Testis (tissue), 5 donors: ENCODE measurements at regions of chr22 and their contacts with region 1.

Region 1: DNA sequence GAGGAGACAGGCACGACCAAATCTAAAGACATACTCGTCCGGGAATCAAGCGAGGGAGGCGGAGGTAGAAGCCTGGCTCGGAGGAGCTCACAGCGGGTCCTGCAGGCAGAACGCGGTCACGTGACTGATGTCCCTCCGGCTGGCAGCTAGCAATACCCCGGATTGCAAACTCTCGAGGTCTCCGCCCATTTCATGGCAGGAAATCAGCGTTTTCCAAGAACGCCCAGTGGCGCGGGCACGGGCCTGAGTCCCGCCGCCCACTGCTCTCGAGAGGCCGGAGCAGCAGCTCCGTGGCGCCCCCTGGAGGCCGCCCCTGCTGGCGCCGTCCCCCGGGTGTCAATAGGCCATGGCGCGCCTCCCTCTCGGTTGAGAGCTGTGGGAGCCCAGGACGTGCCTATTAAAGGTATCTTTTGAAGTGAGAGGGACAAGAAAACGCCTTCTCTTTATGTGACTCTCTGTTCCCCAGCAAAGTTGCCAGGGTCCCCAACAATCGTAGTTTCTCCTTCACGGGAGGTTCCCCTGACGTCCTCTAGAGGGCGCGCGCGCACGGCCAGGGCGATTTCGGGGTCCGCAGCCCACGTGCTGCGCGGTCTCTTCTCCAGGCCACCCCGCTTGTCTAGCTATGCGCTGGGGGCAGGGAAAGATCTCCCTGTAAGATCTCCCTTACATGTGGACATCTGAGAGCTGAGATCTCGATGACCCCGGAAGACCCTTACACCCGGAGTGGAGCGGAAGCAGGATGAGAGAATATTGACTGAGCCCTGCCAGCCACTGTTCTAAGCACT is 37.3 kb upstream of the RBFOX2 start:
- DNase-seq: peak; percentile 91
- H3K4me3 ChIP-seq: peak overlapping the region; percentile 51 to 53
- H3K27ac ChIP-seq: peak overlapping the region; percentile 61 to 90
- H3K4me1 ChIP-seq: peaks cover 4% of the 10 kb centered on the region
- H3K27me3 ChIP-seq: no peaks in the 10 kb centered on the region
- CTCF ChIP-seq: peak; percentile 96 to 100 (median 99)
- POLR2A ChIP-seq: no peak

Region 2: DNA sequence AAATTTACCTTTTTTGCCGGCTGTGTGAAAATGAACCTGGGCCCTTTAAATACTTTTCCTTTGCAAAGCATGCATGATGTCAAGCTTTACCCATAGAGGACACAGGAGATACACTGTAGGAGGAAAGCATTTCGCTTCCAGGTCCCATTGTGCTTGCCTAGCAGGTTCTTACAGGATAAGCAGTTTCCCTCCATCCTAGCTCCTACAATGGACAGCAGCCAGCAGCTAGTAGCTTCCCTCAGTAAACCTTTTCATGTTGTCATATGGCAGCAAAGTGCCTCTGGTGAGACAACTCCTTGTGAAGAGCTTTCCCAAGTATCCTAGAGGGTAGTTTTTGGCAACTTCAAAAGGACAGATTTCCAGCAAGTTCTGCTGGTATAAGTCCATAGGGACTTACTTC is 115.7 kb before region 1 on chr22:
- intact Hi-C with region 1: no loop called
- DNase-seq: no peak
- H3K4me3 ChIP-seq: no peak overlapping the region
- H3K27ac ChIP-seq: no peak overlapping the region
- H3K4me1 ChIP-seq: no peaks in the 10 kb centered on the region
- H3K27me3 ChIP-seq: no peaks in the 10 kb centered on the region
- CTCF ChIP-seq: no peak
- POLR2A ChIP-seq: no peak

Region 3: GRCh38 chr22:36123673-36124630 is 58.0 kb after region 1 on chr22:
- intact Hi-C with region 1: loop called (anchors 10 kb)
- DNase-seq: peak; percentile 96
- H3K4me3 ChIP-seq: peak overlapping the region; percentile 27 to 52
- H3K27ac ChIP-seq: peak overlapping the region; percentile 83 to 86
- H3K4me1 ChIP-seq: no peaks in the 10 kb centered on the region
- H3K27me3 ChIP-seq: no peaks in the 10 kb centered on the region
- CTCF ChIP-seq: peak; percentile 96 to 99 (median 99)
- POLR2A ChIP-seq: no peak

Region 4: GRCh38 chr22:36239401-36240171 is 173.6 kb after region 1 on chr22 and contains the start of gene APOL2:
- intact Hi-C with region 1: no loop called
- DNase-seq: peak; percentile 95
- H3K4me3 ChIP-seq: peak within 1 kb of the TSS; percentile 48 to 62
- H3K27ac ChIP-seq: peak within 1 kb of the TSS; percentile 87 to 88
- H3K4me1 ChIP-seq: peaks cover 39% of the 10 kb centered on the region
- H3K27me3 ChIP-seq: no peaks in the 10 kb centered on the region
- CTCF ChIP-seq: peak; percentile 46 to 63 (median 62)
- POLR2A ChIP-seq: no peak
- total RNA-seq, gene APOL2: 19.5 to 34.5 TPM

Region 5: DNA sequence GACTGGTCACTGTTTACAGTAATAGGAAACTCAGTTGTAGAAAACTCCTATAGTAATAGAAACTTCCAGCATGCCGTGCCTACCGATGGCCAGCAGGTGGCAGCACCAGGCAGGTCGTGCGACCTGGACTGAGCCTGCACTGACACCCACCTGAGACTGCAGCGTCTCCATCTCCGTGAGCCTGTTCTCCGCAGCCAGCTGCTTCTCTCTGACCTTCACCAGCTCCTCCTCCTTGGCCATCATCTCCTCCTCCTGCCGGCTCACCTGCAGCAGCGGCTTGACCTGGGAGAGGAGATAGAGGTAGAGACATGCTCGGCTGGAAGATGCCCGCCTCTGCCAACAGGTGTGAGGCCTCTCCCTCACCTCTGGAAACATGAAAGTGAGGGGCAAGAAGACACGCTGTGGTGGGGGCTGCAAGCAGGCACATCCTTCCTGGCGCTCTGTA is 235.4 kb after region 1 on chr22:
- intact Hi-C with region 1: no loop called
- DNase-seq: peak; percentile 81
- H3K4me3 ChIP-seq: no peak overlapping the region
- H3K27ac ChIP-seq: no peak overlapping the region
- H3K4me1 ChIP-seq: no peaks in the 10 kb centered on the region
- H3K27me3 ChIP-seq: no peaks in the 10 kb centered on the region
- CTCF ChIP-seq: peak; percentile 95 to 98 (median 97)
- POLR2A ChIP-seq: no peak